Aorta (tissue), 5 donors: ENCODE measurements at regions of chr17 and their contacts with region 1.

Region 1: GRCh38 chr17:1724506-1725362 is at the start of gene WDR81:
- DNase-seq: peak; percentile 95 to 97
- ATAC-seq: peak; percentile 89
- H3K4me3 ChIP-seq: peak within 1 kb of the TSS; percentile 68 to 75
- H3K27ac ChIP-seq: peak within 1 kb of the TSS in 1 of 2 donors; percentile 23
- H3K4me1 ChIP-seq: no peaks in the 10 kb centered on the region
- H3K27me3 ChIP-seq: no peaks in the 10 kb centered on the region
- total RNA-seq, gene WDR81: 16.1 to 27.3 TPM

Region 2: GRCh38 chr17:1617620-1618174 is 107.0 kb before region 1 on chr17:
- intact Hi-C with region 1: no loop called
- DNase-seq: no peak
- ATAC-seq: peak; percentile 33
- H3K4me3 ChIP-seq: no peak overlapping the region
- H3K27ac ChIP-seq: no peak overlapping the region
- H3K4me1 ChIP-seq: no peaks in the 10 kb centered on the region
- H3K27me3 ChIP-seq: no peaks in the 10 kb centered on the region

Region 3: DNA sequence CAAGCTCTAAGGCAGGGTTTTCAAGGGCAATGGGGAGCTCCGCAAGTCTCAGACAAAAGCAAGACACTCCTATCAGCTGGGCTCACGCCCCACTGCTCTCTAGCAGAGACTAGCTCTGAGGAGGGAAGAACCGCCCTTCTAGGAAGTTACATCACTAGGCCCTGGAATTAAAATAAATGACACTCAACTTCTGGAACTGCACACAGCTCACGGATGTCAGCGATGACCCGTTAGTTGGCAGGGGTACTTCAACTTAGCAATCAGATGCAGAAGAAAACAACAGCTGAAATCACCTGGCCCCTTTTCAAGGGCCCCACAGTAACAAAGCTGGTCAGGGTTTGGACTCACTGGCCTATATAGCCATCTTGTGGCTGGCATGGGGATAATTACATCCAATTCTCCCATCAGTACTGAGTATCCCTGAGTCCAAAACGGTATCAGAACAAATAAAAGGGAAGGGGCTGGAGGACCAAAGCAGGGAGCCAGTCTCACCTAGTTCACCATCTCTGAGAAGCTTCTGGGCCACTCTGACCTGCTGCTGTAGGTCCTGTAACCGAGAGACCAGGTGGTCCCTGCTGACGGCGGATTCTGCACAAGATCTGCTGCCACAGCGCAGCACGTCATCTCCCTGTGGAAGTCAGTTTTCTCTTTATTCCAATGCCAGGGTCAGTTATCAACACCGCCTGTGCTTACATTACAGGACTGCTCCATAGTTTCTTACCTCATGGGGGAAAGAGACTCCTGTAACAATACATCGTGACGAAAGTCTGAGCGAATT is 59.3 kb after region 1 on chr17:
- intact Hi-C with region 1: loop called (anchors 2 to 5 kb)
- DNase-seq: peak; percentile 84 to 86
- ATAC-seq: peak; percentile 80
- H3K4me3 ChIP-seq: no peak overlapping the region
- H3K27ac ChIP-seq: peak overlapping the region in 1 of 2 donors; percentile 8
- H3K4me1 ChIP-seq: peaks cover 0 to 4% of the 10 kb centered on the region in 2 donors
- H3K27me3 ChIP-seq: no peaks in the 10 kb centered on the region

Region 4: DNA sequence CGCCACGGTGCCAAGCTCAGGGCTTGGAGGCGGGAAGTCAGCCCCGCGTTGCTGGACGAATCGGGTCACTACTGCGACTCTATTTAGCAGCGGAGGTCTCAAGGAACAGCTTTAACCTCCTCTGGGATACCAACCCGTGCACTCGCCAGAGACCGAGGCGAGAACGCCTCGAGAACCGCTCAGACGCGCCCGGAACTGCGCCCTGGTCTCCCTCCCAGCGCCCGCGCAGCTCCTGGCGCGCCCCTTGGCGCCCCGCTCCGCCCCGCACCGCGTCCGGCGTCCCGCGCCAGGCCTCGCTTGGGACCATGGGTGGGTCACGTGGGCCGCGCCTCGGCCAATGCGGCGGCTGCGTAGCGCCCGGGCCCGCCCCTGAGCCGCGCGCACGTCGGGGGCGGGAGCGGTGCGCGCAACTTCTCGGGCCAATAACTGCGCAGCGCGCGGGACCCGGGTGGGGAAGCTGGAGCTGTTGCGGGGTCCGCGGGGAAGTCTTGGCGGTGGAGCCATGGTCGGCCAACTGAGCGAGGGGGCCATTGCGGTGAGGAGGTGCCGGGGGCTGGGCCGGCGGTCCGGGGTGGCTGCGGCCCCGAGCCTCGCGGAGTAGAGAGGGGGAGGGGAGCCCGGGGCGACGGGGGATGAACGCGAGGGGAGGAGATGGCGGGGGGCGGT is 105.0 kb after region 1 on chr17 and contains the starts of genes RPA1 and SMYD4:
- intact Hi-C with region 1: loop called (anchors 2 to 10 kb)
- DNase-seq: peak; percentile 93 to 97
- ATAC-seq: peak; percentile 99
- H3K4me3 ChIP-seq: peak within 1 kb of the TSS; percentile 58 to 76
- H3K27ac ChIP-seq: peak within 1 kb of the TSS in 1 of 2 donors; percentile 27
- H3K4me1 ChIP-seq: no peaks in the 10 kb centered on the region
- H3K27me3 ChIP-seq: no peaks in the 10 kb centered on the region
- total RNA-seq, gene RPA1: 65.0 to 75.0 TPM
- total RNA-seq, gene SMYD4: 15.0 to 19.2 TPM

Region 5: GRCh38 chr17:1865252-1866037 is 140.7 kb after region 1 on chr17:
- intact Hi-C with region 1: loop called (anchors 2 to 10 kb)
- DNase-seq: no peak
- ATAC-seq: no peak
- H3K4me3 ChIP-seq: no peak overlapping the region
- H3K27ac ChIP-seq: no peak overlapping the region
- H3K4me1 ChIP-seq: no peaks in the 10 kb centered on the region
- H3K27me3 ChIP-seq: no peaks in the 10 kb centered on the region

Region 6: DNA sequence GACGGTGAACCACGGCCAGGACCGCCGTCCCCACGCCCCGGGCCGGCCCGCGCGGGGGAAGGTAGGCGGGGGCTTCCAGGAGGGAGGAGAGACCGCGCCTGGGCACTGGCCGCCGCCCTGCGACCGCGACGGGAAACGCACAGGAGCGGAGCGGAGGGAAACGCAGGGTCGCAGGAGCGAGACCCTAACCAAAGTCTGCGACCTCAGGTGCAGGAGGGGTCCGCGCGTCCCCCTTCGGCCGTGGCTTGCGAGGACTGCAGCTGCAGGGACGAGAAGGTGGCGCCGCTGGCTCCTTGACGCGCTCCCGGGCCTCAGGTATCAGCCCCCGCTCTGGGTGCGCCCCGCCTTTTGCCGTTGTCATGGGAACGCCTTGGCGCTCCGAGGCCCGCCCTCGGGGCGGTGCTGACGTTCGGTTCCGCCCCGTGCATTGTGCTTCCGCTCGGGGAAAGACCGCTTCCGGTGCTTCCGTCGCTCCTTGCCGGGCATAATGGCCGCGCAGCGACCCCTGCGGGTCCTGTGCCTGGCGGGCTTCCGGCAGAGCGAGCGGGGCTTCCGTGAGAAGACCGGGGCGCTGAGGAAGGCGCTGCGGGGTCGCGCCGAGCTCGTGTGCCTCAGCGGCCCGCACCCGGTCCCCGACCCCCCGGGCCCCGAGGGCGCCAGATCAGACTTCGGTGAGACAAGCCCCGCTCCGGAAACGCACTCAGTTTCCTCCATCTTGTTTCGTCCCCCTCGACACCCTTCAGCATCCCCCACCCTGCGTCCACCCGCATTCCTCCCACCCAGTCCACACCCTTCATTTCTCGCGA is 317.0 kb after region 1 on chr17 and contains the start of gene OVCA2:
- intact Hi-C with region 1: loop called in 1 of 2 experiments (anchors 10 kb)
- DNase-seq: peak; percentile 96 to 99
- ATAC-seq: peak; percentile 96
- H3K4me3 ChIP-seq: peak within 1 kb of the TSS; percentile 44 to 55
- H3K27ac ChIP-seq: peak within 1 kb of the TSS in 1 of 2 donors; percentile 43
- H3K4me1 ChIP-seq: no peaks in the 10 kb centered on the region
- H3K27me3 ChIP-seq: no peaks in the 10 kb centered on the region
- total RNA-seq, gene OVCA2: 14.2 to 19.8 TPM